HCT116 (cell line): ENCODE measurements at regions of chr22 and their contacts with region 1.

Region 1: GRCh38 chr22:37199103-37199759 is 11.2 kb upstream of the C1QTNF6 start:
- DNase-seq: peak; percentile 97
- ATAC-seq: peak; percentile 88
- H3K4me3 ChIP-seq: peak overlapping the region; percentile 77 to 82
- H3K27ac ChIP-seq: peak overlapping the region; percentile 94
- H3K4me1 ChIP-seq: peaks cover 38 to 63% of the 10 kb centered on the region in 2 experiments
- H3K27me3 ChIP-seq: no peaks in the 10 kb centered on the region
- CTCF ChIP-seq: peak in 2 of 3 experiments; percentile 76 to 93; a peak in 4 of 6 replicates
- POLR2A ChIP-seq: peak; percentile 89
- RAD21 ChIP-seq: no peak

Region 2: GRCh38 chr22:36781656-36782627 is 417.3 kb before region 1 on chr22:
- CTCF ChIA-PET with region 1: interaction called, 3 read pairs
- POLR2A ChIA-PET with region 1: interaction called, 4 read pairs
- RAD21 ChIA-PET with region 1: no interaction called
- intact Hi-C with region 1: loop called (anchors 2 kb)
- DNase-seq: peak; percentile 57
- ATAC-seq: peak; percentile 95
- H3K4me3 ChIP-seq: peak overlapping the region in 1 of 2 experiments; percentile 1; a peak in 1 of 4 replicates
- H3K27ac ChIP-seq: peak overlapping the region; percentile 14; the same call in 1 of the 2 replicates
- H3K4me1 ChIP-seq: peaks cover 2 to 13% of the 10 kb centered on the region in 2 experiments; a peak in 3 of 4 replicates
- H3K27me3 ChIP-seq: no peaks in the 10 kb centered on the region
- CTCF ChIP-seq: peak; percentile 86 to 96 (median 93)
- POLR2A ChIP-seq: no peak
- RAD21 ChIP-seq: peak; percentile 93

Region 3: DNA sequence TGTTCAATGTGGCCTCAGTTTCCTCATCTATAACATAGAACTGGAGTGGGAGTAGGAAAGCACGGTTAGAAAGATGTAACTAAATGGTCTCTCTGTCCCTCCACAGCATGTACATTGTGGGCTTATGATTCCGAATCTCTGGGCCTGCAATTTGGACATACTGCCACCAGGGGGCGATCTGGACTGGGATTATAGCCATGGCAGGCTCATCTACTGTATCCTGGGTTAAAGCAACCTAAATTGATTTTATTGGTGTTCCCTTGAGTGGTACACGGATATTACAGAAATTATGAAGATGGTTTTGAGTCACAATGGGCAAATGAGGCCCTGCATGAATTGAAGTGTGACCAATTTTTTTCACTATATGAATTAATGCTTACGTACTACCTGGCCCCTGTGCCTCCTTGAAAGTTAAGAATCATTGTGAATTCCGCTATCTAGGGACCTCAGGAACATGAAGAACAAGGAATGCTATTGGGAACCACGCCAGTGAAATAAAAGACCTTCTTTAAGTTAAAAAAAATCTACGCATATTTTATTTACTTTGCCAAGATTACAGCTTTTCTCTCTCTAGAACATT is 212.9 kb before region 1 on chr22:
- CTCF ChIA-PET with region 1: no interaction called
- POLR2A ChIA-PET with region 1: no interaction called
- RAD21 ChIA-PET with region 1: no interaction called
- intact Hi-C with region 1: loop called (anchors 1 kb)
- DNase-seq: no peak
- ATAC-seq: peak; percentile 69
- H3K4me3 ChIP-seq: no peak overlapping the region
- H3K27ac ChIP-seq: no peak overlapping the region
- H3K4me1 ChIP-seq: peaks cover 0 to 5% of the 10 kb centered on the region in 2 experiments; a peak in 1 of 4 replicates
- H3K27me3 ChIP-seq: no peaks in the 10 kb centered on the region
- CTCF ChIP-seq: peak; percentile 64 to 99 (median 94); a peak in 5 of 6 replicates
- POLR2A ChIP-seq: no peak
- RAD21 ChIP-seq: peak; percentile 77

Region 4: DNA sequence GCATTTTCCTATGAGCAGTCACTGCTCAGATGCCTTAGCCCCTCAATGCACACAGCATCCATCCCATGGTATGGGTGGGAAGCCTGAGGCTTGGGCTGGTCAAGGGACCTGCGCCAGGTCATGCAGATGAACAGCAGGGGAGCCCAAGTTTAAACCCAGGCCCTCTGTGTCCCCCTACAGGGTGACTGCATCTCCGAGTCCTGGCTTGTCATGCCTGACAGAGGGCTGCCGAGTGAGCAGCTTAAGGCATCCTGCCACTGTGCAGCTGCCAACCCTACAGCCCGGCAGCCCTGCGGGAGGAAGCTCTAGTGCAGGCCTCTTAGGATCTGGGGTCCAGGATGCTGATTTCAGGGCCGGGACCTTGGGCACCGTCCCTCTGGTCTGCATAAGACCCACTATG is 59.5 kb before region 1 on chr22:
- CTCF ChIA-PET with region 1: interaction called, 4 read pairs
- POLR2A ChIA-PET with region 1: no interaction called
- RAD21 ChIA-PET with region 1: no interaction called
- intact Hi-C with region 1: loop called (anchors 10 kb)
- DNase-seq: no peak
- ATAC-seq: peak; percentile 47; the same call in 1 of the 2 replicates
- H3K4me3 ChIP-seq: no peak overlapping the region
- H3K27ac ChIP-seq: no peak overlapping the region
- H3K4me1 ChIP-seq: no peaks in the 10 kb centered on the region
- H3K27me3 ChIP-seq: no peaks in the 10 kb centered on the region
- CTCF ChIP-seq: no peak
- POLR2A ChIP-seq: no peak
- RAD21 ChIP-seq: no peak

Region 5: GRCh38 chr22:37186228-37186996 is 12.8 kb before region 1 on chr22:
- CTCF ChIA-PET with region 1: interaction called, 9 read pairs
- POLR2A ChIA-PET with region 1: interaction called, 29 read pairs
- RAD21 ChIA-PET with region 1: interaction called, 5 to 7 read pairs
- intact Hi-C with region 1: no loop called
- DNase-seq: peak; percentile 97
- ATAC-seq: peak; percentile 68
- H3K4me3 ChIP-seq: peak overlapping the region; percentile 58 to 67
- H3K27ac ChIP-seq: peak overlapping the region; percentile 100
- H3K4me1 ChIP-seq: peaks cover 51 to 58% of the 10 kb centered on the region in 2 experiments
- H3K27me3 ChIP-seq: no peaks in the 10 kb centered on the region
- CTCF ChIP-seq: no peak
- POLR2A ChIP-seq: no peak
- RAD21 ChIP-seq: no peak

Region 6: GRCh38 chr22:37260901-37261336 is 61.7 kb after region 1 on chr22:
- CTCF ChIA-PET with region 1: interaction called, 22 read pairs
- POLR2A ChIA-PET with region 1: no interaction called
- RAD21 ChIA-PET with region 1: interaction called, 3 to 4 read pairs
- intact Hi-C with region 1: no loop called
- DNase-seq: peak; percentile 45
- ATAC-seq: peak; percentile 72
- H3K4me3 ChIP-seq: no peak overlapping the region
- H3K27ac ChIP-seq: no peak overlapping the region
- H3K4me1 ChIP-seq: peaks cover 21 to 33% of the 10 kb centered on the region in 2 experiments
- H3K27me3 ChIP-seq: no peaks in the 10 kb centered on the region
- CTCF ChIP-seq: peak; percentile 85 to 92 (median 92)
- POLR2A ChIP-seq: no peak
- RAD21 ChIP-seq: peak; percentile 76

Region 7: DNA sequence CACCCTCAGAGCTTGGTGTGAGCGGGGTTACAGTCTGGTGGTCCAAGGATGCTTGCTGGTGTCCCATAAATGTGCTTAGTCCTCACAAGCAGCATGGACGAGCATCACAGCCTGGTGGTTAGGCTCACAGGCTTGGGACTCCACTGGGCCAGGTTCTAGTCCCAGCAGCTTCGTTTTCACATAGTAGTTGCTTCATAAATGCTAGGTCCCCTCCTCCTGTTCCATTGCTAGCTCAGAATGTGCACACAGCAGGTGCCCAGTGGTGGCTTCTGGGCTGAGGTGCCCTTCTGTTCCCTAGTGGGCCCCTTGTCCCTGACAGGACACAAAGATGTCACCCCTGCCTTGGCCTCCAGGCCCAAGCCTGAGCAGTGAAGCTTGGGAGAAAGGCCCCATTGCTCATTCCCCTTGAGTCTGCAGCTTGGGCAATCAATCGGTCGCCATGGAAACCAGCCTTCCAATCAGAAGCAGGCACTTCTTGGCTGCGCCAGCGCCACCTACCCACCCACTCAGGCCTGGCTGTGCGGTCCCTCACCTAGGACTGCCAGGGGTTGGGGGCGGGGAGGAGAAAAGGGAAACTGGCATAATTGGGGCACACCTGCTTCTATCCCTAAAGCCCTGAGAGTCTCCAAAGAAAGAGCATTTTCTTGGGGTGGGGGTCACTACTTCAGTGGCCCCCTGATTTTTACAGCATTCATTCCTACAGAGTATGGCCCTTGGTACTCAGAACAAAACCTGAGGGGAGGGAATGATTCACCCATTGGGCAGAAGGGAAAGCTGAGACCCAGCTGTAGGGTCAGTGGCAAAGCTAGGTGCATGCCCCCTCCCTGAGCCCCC is 131.2 kb after region 1 on chr22:
- CTCF ChIA-PET with region 1: no interaction called
- POLR2A ChIA-PET with region 1: no interaction called
- RAD21 ChIA-PET with region 1: no interaction called
- intact Hi-C with region 1: no loop called
- DNase-seq: peak; percentile 96
- ATAC-seq: peak; percentile 60
- H3K4me3 ChIP-seq: peak overlapping the region; percentile 17 to 29
- H3K27ac ChIP-seq: peak overlapping the region; percentile 100
- H3K4me1 ChIP-seq: peaks cover 81 to 96% of the 10 kb centered on the region in 2 experiments
- H3K27me3 ChIP-seq: no peaks in the 10 kb centered on the region
- CTCF ChIP-seq: peak in 2 of 3 experiments; percentile 55 to 62; a peak in 4 of 6 replicates
- POLR2A ChIP-seq: no peak
- RAD21 ChIP-seq: no peak